CD8-positive, alpha-beta T cell (primary cell): ENCODE measurements at regions of chr17 and their contacts with region 1.

Region 1: DNA sequence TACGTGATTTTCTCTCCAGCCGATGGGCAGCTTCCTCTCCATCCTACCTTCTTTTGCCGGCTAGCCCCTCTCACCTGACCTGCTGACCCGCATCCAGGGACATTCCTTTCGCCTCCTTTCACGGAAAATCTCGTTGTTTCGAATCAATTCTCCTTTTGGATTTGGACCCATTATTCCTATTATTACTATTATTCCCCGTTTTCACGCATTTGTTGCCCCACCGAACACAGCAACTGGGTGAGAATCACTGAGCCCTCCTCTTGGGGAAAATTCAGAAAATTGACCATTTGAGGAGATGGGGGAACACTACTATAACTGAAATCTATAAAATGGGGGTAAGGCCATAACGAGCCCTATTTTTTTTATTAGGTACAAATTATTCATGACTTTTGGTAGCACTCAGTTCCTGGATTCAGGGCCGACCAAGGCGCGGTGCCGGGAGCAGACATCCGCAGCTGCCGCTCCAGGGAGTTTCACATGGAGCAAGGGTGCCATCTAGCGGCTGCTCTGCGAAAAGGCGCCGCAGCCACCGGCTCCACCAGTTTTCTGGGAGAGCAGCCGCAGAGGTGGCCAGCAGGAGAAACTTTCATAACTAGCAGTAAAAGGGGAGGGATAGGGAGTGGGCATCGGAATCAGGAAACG is 3.3 kb upstream of the HOXB8 start:
- DNase-seq: peak; percentile 66 to 90 (median 85)
- ATAC-seq: peak; percentile 72
- H3K4me3 ChIP-seq: no peak overlapping the region
- H3K4me3 Mint-ChIP-seq: peak overlapping the region; percentile 42
- H3K27ac ChIP-seq: no peak overlapping the region
- H3K27ac Mint-ChIP-seq: no peak overlapping the region
- H3K4me1 ChIP-seq: peaks cover 35% of the 10 kb centered on the region
- H3K4me1 Mint-ChIP-seq: peaks cover 33% of the 10 kb centered on the region
- H3K27me3 ChIP-seq: peaks cover 64 to 70% of the 10 kb centered on the region in 2 experiments
- H3K27me3 Mint-ChIP-seq: peaks cover 86% of the 10 kb centered on the region
- CTCF ChIP-seq: peak; percentile 98

Region 2: DNA sequence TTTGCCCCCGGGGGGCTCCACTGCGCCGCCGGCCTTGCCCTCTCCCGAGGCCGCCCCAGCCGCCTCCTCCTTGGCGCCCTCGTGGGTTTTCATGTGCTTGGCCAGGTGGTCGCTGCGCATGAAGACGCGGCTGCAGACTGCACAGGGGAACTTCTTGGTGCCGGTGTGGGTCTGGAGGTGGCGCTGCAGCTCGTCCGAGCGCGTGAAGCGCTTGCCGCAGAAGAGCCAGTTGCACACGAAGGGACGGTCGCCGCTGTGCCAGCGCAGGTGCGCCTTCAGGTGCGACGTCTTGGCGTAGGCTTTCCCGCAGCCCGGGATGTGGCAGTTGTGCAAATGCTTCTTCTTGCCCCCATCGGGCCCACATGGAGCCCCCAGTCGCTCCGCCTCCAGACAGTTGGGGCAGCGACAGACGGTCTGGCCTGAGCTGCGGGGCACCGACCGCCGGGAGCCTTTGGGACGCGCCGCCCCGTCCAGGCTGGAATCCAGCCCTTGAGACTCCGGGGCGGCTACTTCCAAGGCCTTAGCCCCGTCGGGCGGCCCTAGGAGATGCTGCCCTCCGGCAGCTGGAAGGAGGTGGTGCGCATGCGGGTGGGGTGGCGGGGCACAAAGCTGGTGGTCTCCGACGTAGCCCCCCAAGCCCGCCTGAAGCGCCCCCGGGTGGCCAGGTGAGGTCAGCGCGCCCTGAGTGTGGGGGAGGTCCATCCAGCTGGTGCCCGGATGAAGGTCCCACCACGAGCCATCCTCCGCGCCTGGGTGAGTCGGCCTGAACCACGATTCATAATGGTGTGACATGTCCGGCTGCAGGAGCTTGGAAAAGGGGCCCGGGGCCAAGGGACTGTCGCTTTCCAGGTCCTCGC is 770.8 kb before region 1 on chr17:
- CTCF ChIA-PET with region 1: no interaction called
- POLR2A ChIA-PET with region 1: no interaction called
- intact Hi-C with region 1: loop called in 1 of 2 experiments (anchors 2 kb)
- DNase-seq: peak in 5 of 9 experiments; percentile 17 to 63 (median 39)
- ATAC-seq: no peak
- H3K4me3 ChIP-seq: no peak overlapping the region
- H3K4me3 Mint-ChIP-seq: no peak overlapping the region
- H3K27ac ChIP-seq: no peak overlapping the region
- H3K27ac Mint-ChIP-seq: no peak overlapping the region
- H3K4me1 ChIP-seq: peaks cover 48% of the 10 kb centered on the region
- H3K4me1 Mint-ChIP-seq: peaks cover 28% of the 10 kb centered on the region
- H3K27me3 ChIP-seq: peaks cover 55 to 62% of the 10 kb centered on the region in 2 experiments
- H3K27me3 Mint-ChIP-seq: peaks cover 69% of the 10 kb centered on the region
- CTCF ChIP-seq: peak; percentile 33

Region 3: GRCh38 chr17:48084932-48085444 is 533.4 kb before region 1 on chr17:
- CTCF ChIA-PET with region 1: interaction called, 24 read pairs
- POLR2A ChIA-PET with region 1: no interaction called
- intact Hi-C with region 1: loop called in 1 of 2 experiments (anchors 1 kb)
- DNase-seq: no peak
- ATAC-seq: no peak
- H3K4me3 ChIP-seq: no peak overlapping the region
- H3K4me3 Mint-ChIP-seq: no peak overlapping the region
- H3K27ac ChIP-seq: no peak overlapping the region
- H3K27ac Mint-ChIP-seq: no peak overlapping the region
- H3K4me1 ChIP-seq: no peaks in the 10 kb centered on the region
- H3K4me1 Mint-ChIP-seq: peaks cover 10% of the 10 kb centered on the region
- H3K27me3 ChIP-seq: no peaks in the 10 kb centered on the region
- H3K27me3 Mint-ChIP-seq: no peaks in the 10 kb centered on the region
- CTCF ChIP-seq: no peak

Region 4: DNA sequence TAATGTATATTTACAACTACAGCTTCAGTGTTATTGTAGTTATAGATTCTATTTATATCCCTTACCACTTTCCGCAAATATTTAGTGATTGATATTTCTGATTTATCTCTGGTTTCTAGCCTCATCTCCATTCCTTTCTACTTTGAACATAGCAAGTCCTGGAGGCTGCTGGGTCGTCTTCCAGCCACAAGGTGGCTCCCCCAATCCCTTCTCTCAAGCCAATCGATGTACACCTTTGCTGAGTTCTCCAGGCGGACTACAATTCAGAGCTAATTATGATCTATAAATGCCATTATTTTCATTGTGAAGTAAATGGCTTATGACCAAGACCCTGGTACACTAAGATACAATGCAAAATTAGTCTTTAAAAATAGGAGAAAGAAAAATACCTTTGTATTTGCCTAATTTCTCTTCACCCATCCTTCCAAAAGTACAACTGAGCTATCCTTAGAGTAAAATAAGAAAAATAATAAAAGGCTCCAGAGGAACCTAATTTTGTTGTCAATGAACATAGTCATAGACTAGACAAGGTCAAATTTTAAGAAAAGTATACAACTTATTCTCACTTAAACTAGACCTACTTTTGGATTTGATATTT is 310.5 kb before region 1 on chr17:
- CTCF ChIA-PET with region 1: interaction called, 14 read pairs
- POLR2A ChIA-PET with region 1: interaction called, 4 read pairs
- intact Hi-C with region 1: loop called in 1 of 2 experiments (anchors 1 kb)
- DNase-seq: peak; percentile 13 to 71 (median 53)
- ATAC-seq: peak; percentile 87
- H3K4me3 ChIP-seq: no peak overlapping the region
- H3K4me3 Mint-ChIP-seq: no peak overlapping the region
- H3K27ac ChIP-seq: no peak overlapping the region
- H3K27ac Mint-ChIP-seq: no peak overlapping the region
- H3K4me1 ChIP-seq: no peaks in the 10 kb centered on the region
- H3K4me1 Mint-ChIP-seq: peaks cover 26% of the 10 kb centered on the region
- H3K27me3 ChIP-seq: no peaks in the 10 kb centered on the region
- H3K27me3 Mint-ChIP-seq: no peaks in the 10 kb centered on the region
- CTCF ChIP-seq: peak; percentile 90

Region 5: DNA sequence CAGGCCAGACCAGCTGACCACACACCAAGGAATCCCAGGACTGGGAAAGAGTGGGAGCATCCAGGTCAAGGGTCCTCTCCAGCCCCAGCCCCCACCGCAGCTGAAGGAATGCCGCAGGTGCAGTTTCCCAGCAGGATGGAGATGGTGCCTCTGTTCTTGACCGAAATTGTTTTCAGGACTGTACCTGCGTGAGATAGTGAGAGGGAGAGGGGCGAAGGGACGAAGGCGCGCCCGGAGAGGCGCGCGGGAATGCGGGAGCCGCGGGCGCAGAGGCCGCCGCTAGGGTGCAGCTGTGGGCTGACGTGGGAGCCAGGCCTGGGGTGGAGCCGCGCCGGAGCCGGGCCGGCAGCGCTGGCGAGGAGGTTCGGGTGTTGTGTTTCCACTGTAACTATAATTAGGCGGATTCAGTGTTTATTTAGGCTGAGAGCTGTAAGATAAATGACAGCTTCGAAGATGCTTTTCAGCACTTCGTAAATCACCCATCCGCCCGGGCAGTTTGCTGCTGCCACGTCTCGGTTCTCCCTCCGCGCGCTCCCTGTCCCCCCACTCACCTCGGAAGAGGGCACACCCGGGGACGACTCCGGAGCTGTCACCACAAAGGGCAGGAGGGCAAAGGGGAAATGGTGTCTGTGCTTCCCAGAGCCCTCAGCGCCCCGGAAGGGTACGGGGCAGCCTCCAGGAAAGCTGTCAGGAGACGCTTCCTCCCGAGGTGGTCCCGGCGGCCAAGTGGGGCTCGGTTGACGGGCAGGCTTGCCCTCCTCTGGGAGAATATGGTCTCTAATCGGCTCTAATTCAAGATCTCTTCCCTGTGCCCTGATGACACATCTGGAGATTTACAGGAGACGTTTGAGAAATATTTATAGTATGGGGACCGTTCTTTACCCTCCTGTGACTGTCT is 125.7 kb before region 1 on chr17:
- CTCF ChIA-PET with region 1: interaction called, 6 read pairs
- POLR2A ChIA-PET with region 1: no interaction called
- intact Hi-C with region 1: loop called (anchors 1 kb)
- DNase-seq: peak; percentile 49 to 80 (median 67)
- ATAC-seq: peak; percentile 96
- H3K4me3 ChIP-seq: peak overlapping the region; percentile 38 to 41
- H3K4me3 Mint-ChIP-seq: peak overlapping the region; percentile 61
- H3K27ac ChIP-seq: no peak overlapping the region
- H3K27ac Mint-ChIP-seq: no peak overlapping the region
- H3K4me1 ChIP-seq: no peaks in the 10 kb centered on the region
- H3K4me1 Mint-ChIP-seq: peaks cover 5% of the 10 kb centered on the region
- H3K27me3 ChIP-seq: peaks cover 0 to 7% of the 10 kb centered on the region in 2 experiments
- H3K27me3 Mint-ChIP-seq: peaks cover 26% of the 10 kb centered on the region
- CTCF ChIP-seq: peak; percentile 83

Region 6: GRCh38 chr17:48593840-48594537 is 24.4 kb before region 1 on chr17:
- CTCF ChIA-PET with region 1: interaction called, 32 read pairs
- POLR2A ChIA-PET with region 1: no interaction called
- intact Hi-C with region 1: no loop called
- DNase-seq: peak; percentile 69 to 88 (median 80)
- ATAC-seq: peak; percentile 76
- H3K4me3 ChIP-seq: peak overlapping the region in 1 of 2 experiments; percentile 46
- H3K4me3 Mint-ChIP-seq: peak overlapping the region; percentile 81
- H3K27ac ChIP-seq: no peak overlapping the region
- H3K27ac Mint-ChIP-seq: no peak overlapping the region
- H3K4me1 ChIP-seq: peaks cover 41% of the 10 kb centered on the region
- H3K4me1 Mint-ChIP-seq: peaks cover 46% of the 10 kb centered on the region
- H3K27me3 ChIP-seq: peaks cover 43 to 55% of the 10 kb centered on the region in 2 experiments
- H3K27me3 Mint-ChIP-seq: peaks cover 82% of the 10 kb centered on the region
- CTCF ChIP-seq: peak; percentile 85